PC-9 (cell line): ENCODE measurements at regions of chr22 and their contacts with region 1.

Region 1: GRCh38 chr22:19730655-19731360 is 7.5 kb downstream of the GP1BB start:
- DNase-seq: peak in 1 of 2 experiments; percentile 75
- H3K4me3 ChIP-seq: peak overlapping the region; percentile 48; the same call in 1 of the 2 replicates
- H3K27ac ChIP-seq: no peak overlapping the region
- H3K4me1 ChIP-seq: peaks cover 6% of the 10 kb centered on the region
- H3K27me3 ChIP-seq: no peaks in the 10 kb centered on the region
- CTCF ChIP-seq: peak; percentile 89

Region 2: GRCh38 chr22:19052941-19053541 is 677.8 kb before region 1 on chr22:
- CTCF ChIA-PET with region 1: no interaction called
- POLR2A ChIA-PET with region 1: no interaction called
- intact Hi-C with region 1: no loop called
- DNase-seq: no peak
- H3K4me3 ChIP-seq: no peak overlapping the region
- H3K27ac ChIP-seq: no peak overlapping the region
- H3K4me1 ChIP-seq: no peaks in the 10 kb centered on the region
- H3K27me3 ChIP-seq: no peaks in the 10 kb centered on the region
- CTCF ChIP-seq: no peak

Region 3: DNA sequence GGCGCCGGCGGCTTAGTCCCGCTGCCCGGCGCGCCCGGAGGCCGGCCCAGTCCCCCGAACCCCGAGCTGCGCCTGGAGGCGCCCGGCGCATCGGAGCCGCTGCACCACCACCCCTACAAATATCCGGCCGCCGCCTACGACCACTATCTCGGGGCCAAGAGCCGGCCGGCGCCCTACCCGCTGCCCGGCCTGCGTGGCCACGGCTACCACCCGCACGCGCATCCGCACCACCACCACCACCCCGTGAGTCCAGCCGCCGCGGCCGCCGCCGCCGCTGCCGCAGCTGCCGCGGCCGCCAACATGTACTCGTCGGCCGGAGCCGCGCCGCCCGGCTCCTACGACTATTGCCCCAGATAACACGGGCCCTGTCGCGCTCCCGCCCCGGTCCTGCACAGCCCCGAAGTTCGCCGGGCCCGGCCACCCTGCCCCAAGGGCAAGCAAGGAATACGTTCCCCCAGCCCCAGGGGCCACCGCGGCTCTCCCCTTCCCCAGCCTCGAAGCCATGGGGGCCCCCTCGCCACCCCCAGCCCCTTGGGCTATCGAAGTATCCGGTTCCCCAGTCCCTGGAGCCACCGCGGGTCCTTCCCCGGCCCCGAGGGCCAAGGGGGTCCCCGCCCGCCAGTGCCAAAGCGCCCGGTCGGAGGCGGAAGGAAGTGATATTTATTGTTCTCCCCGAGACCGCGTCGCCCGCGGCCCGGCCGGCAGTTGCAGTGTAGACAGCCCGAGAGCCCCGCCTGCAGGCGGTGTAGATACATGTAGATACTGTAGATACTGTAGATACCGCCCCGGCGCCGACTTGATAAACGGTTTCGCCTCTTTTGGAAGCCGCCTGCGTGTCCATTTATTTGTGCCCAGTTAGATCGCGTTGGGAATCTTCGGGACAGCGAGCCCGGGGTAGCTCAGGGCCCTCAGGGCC is 36.0 kb after region 1 on chr22:
- CTCF ChIA-PET with region 1: no interaction called
- POLR2A ChIA-PET with region 1: no interaction called
- intact Hi-C with region 1: loop called (anchors 1 kb)
- DNase-seq: peak in 1 of 2 experiments; percentile 54
- H3K4me3 ChIP-seq: peak overlapping the region; percentile 48; the same call in 1 of the 2 replicates
- H3K27ac ChIP-seq: no peak overlapping the region
- H3K4me1 ChIP-seq: peaks cover 7% of the 10 kb centered on the region; the same call in 1 of the 2 replicates
- H3K27me3 ChIP-seq: peaks cover 29% of the 10 kb centered on the region
- CTCF ChIP-seq: peak; percentile 46; the same call in 1 of the 2 replicates

Region 4: GRCh38 chr22:19806213-19807145 is 75.7 kb after region 1 on chr22:
- CTCF ChIA-PET with region 1: no interaction called
- POLR2A ChIA-PET with region 1: no interaction called
- intact Hi-C with region 1: no loop called
- DNase-seq: peak; percentile 91 to 94
- H3K4me3 ChIP-seq: peak overlapping the region; percentile 19; the same call in 1 of the 2 replicates
- H3K27ac ChIP-seq: peak overlapping the region; percentile 71
- H3K4me1 ChIP-seq: peaks cover 27% of the 10 kb centered on the region
- H3K27me3 ChIP-seq: no peaks in the 10 kb centered on the region
- CTCF ChIP-seq: no peak

Region 5: DNA sequence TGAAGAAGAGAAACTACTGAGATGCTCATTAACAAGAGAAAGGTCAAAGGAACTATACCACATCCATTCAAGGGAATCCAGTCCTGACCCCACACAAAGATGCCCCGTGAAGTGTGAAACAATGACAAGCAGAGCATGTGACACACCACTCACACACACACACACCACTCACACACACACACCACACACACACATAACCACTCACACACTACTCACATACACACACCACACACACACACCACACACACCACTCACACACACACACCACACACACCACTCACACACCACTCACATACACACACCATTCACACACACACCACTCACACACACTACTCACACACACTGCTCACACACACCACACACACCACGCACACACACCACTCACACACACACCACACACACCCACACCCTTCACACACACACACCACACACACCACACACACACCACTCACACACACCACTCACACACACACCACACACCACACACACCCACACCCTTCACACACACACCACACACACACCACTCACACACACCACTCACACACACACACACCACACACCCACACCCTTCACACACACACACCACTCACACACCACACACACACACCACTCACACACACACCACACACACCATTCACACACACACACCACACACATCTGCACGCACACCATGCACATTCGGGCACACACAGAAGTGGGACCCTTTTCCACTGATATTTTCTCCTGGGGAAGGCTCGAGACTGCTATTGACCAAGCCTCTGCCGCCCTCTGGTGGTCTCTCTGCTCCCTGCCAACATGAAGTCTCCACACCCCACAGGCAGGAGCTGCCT is 178.8 kb after region 1 on chr22:
- CTCF ChIA-PET with region 1: interaction called, 10 read pairs
- POLR2A ChIA-PET with region 1: interaction called, 18 read pairs
- intact Hi-C with region 1: loop called (anchors 1 kb)
- DNase-seq: peak in 1 of 2 experiments; percentile 66
- H3K4me3 ChIP-seq: no peak overlapping the region
- H3K27ac ChIP-seq: no peak overlapping the region
- H3K4me1 ChIP-seq: no peaks in the 10 kb centered on the region
- H3K27me3 ChIP-seq: no peaks in the 10 kb centered on the region
- CTCF ChIP-seq: peak; percentile 86

Region 6: GRCh38 chr22:19942157-19943081 is 211.6 kb after region 1 on chr22:
- CTCF ChIA-PET with region 1: interaction called, 4 read pairs
- POLR2A ChIA-PET with region 1: no interaction called
- intact Hi-C with region 1: loop called (anchors 1 kb)
- DNase-seq: no peak
- H3K4me3 ChIP-seq: peak overlapping the region; percentile 90
- H3K27ac ChIP-seq: peak overlapping the region; percentile 59
- H3K4me1 ChIP-seq: peaks cover 12% of the 10 kb centered on the region; the same call in 1 of the 2 replicates
- H3K27me3 ChIP-seq: no peaks in the 10 kb centered on the region
- CTCF ChIP-seq: no peak